ENCODE measurements at regions of chr17 and their contacts with region 1.

Region 1: DNA sequence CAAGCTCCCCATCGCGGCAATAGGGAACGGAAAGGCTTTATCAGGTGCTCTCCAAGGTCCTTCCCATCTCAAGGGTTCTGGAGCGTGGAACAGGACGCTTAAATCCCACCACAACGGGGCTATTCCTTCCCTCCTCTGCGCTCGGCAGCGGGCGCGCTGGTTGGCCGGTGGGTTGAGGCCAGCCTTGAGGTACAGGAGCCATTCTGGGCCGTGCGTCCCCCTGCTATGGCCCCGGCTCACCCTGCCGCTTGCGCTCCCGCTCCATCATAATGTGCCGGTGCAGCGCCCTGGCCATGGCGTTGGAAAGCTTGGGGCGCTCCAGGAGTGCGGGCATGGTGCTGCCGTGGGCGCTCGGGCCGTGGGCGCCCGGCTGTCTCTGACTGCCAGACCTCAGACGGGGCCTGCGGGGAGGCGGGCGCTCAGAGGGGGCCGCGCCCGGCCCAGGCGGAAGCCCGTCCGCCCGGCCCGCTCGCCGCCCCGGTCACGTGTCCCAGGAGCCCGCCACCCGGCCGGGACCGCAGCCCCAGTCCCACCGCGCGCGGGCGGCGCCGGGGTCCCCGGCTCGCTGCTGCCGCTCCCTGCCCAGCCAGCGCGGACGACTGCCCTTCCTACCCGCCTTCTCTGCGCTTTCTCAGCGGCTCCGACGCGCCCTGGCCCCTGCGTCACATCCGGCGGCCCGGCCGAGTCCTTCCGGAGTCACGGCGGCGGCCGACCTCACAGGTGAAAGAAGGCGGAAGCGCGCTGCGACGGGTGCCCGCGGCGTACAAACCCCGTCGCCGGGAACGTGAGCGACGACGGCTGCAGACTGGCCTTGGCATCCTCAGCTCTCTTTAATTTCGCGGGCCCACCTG is at the start of gene GPS2:
- DNase-seq: peak; percentile 96
- ATAC-seq: peak; percentile 82
- H3K4me3 Mint-ChIP-seq: peak within 1 kb of the TSS; percentile 88
- H3K27ac Mint-ChIP-seq: peak within 1 kb of the TSS; percentile 89
- H3K4me1 Mint-ChIP-seq: peaks cover 45% of the 10 kb centered on the region
- H3K27me3 Mint-ChIP-seq: no peaks in the 10 kb centered on the region
- CTCF ChIP-seq: no peak
- total RNA-seq, gene GPS2: 31.8 to 36.8 TPM

Region 2: DNA sequence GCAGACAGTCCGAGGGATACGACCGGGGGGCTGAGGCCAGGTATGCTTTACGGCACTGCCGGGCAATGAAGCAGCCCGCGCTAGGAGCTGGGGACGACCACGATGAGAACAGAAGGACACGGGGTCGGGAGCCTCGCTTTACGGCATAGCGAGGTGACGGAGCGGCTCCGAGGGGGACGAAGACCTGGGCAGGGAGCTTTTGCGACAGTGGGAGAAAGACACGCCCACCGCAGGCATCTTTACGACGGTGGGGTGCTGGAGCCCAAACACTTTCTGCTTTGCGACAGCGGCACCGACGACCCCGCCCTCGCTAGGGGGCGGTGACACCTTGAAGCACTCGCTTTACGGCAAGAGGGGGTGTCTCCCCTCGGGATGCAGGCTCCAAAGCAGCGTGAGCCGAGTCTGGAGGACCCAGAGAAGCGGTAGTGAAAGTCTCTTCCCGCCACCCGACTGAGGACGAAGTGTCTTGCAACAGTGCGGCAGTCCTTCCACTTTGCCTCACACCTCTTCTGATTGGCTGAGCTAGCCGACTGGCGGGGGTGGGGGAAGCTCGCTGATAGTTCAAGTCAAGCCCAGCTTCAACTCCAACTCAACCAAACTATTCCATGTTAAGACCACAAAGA is 14.5 kb after region 1 on chr17:
- CTCF ChIA-PET with region 1: interaction called, 20 read pairs
- POLR2A ChIA-PET with region 1: interaction called, 150 read pairs
- intact Hi-C with region 1: no loop called
- DNase-seq: peak; percentile 99
- ATAC-seq: peak; percentile 70
- H3K4me3 Mint-ChIP-seq: peak overlapping the region; percentile 80
- H3K27ac Mint-ChIP-seq: peak overlapping the region; percentile 96
- H3K4me1 Mint-ChIP-seq: peaks cover 43% of the 10 kb centered on the region
- H3K27me3 Mint-ChIP-seq: no peaks in the 10 kb centered on the region
- CTCF ChIP-seq: no peak

Region 3: GRCh38 chr17:7336240-7337175 is 21.6 kb after region 1 on chr17 and contains the start of gene ACAP1:
- CTCF ChIA-PET with region 1: interaction called, 6 read pairs
- POLR2A ChIA-PET with region 1: interaction called, 150 read pairs
- intact Hi-C with region 1: no loop called
- DNase-seq: peak; percentile 93
- ATAC-seq: peak; percentile 94
- H3K4me3 Mint-ChIP-seq: peak within 1 kb of the TSS; percentile 89
- H3K27ac Mint-ChIP-seq: peak within 1 kb of the TSS; percentile 93
- H3K4me1 Mint-ChIP-seq: peaks cover 47% of the 10 kb centered on the region
- H3K27me3 Mint-ChIP-seq: no peaks in the 10 kb centered on the region
- CTCF ChIP-seq: no peak
- total RNA-seq, gene ACAP1: 309 to 342 TPM

Measured in activated CD8-positive, alpha-beta T cell treated with anti-CD3 and anti-CD28 coated beads for 36 hours (primary cell).